Activated CD4-positive, alpha-beta T cell treated with anti-CD3 and anti-CD28 coated beads, Interleukin-2, amount 10 ng/mL, durations not matched to agents 7 days and 5 days (primary cell): ENCODE measurements at regions of chr3 and their contacts with region 1.

Region 1: DNA sequence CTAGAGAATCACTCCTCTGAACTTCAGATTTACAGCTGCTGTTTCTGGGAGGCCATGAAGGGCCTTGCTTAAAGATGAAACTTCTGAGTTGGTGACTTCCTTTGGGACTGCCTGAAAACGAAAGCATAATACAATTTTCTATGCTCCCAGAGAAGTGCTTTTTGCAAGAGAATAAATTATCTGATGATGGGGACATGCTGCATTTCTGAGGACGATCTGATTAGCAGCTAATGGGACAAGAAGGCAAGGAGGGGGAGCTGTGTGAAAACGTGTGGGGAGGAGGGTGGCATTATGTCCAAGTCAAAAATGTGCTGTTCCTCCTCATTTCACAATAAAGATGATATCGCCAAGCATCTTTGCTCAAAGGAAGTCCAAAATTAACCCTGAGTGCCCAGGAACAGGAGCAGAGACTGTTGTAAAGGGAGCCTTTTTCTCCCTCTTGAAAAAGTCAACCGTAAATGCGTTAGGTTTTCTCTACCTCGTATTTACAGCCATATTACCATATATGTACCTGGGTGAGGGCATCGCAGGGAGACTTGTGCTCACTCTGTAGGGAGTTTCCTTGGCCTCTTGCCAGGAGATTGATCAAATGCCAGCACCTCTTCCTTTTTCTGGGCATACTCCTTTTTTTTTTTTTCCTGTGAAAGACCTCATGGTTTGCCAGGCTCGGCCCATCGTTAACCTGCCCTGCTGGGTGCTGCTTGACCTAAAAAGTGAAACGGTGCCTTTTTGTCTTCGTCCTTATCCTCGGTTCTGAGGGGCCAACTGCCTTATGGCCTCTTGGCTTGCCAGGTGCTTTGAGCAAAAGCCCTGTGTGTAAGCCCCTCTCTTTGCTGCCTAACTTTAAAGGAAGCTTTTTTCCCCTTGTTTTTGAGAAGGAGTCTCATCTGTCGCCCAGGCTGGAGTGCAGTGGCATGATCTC is 11.5 kb downstream of the ITPR1 start:
- DNase-seq: peak; percentile 51
- H3K4me3 Mint-ChIP-seq: peak overlapping the region; percentile 62
- H3K27ac Mint-ChIP-seq: peak overlapping the region; percentile 83
- H3K4me1 Mint-ChIP-seq: peaks cover 49% of the 10 kb centered on the region
- H3K27me3 Mint-ChIP-seq: no peaks in the 10 kb centered on the region

Region 2: GRCh38 chr3:4517643-4518311 is 13.2 kb after region 1 on chr3:
- CTCF ChIA-PET with region 1: interaction called, 16 read pairs
- POLR2A ChIA-PET with region 1: no interaction called
- DNase-seq: no peak
- H3K4me3 Mint-ChIP-seq: no peak overlapping the region
- H3K27ac Mint-ChIP-seq: peak overlapping the region; percentile 64
- H3K4me1 Mint-ChIP-seq: peaks cover 32% of the 10 kb centered on the region
- H3K27me3 Mint-ChIP-seq: no peaks in the 10 kb centered on the region